Activated T-helper 1 cell treated with anti-CD3 and anti-CD28 coated beads, Interleukin-12 subunit alpha, Interleukin-12 subunit beta, Interleukin-2, Interleukin-4 antibody, amounts not matched to agents 30 ng/mL and 10 ng/mL and 1 ng/mL, durations not matched to agents 14 hours and 24 hours and 36 hours (primary cell): ENCODE measurements at regions of chrX and their contacts with region 1.

Region 1: DNA sequence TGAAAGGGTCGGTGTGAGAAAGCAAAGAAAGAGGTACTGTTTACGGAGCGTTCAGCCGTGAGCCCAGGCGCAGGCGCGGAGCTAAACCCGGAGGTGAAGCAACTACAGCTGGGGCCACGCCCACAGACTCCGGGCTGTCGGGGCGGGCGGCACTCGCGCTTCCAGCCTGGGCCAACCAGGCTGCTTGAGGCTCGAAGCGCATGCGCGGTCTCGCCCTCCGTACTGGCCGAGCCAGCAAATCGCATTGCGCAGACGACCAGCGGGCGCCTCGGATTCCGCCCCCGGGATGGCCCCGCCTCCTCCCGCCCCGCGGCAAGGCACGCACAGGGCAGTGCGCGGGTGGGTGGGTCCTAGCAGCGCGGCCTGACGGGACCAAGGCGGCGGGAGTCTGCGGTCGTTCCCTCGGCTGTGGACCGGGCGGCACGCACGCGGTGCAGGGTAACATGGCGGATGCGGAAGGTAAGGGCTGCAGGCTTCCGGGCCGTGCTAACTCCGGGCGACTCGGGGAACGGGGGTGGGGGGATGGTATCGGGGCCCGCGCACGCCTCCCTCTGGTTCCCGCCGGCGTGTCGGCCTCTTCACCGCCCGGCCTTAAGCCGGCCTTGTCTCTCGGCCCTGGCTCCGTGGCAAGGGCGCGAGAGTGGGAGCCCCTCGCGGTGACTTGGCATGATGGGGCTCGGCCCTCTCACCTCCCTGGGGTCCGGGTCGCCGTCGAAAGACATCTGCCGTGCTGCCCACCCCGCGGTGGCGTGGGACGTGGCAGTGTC is at the start of gene DKC1:
- DNase-seq: peak; percentile 93
- H3K4me3 Mint-ChIP-seq: peak within 1 kb of the TSS; percentile 89
- H3K27ac Mint-ChIP-seq: peak within 1 kb of the TSS; percentile 93
- H3K4me1 Mint-ChIP-seq: peaks cover 31% of the 10 kb centered on the region
- H3K27me3 Mint-ChIP-seq: no peaks in the 10 kb centered on the region
- total RNA-seq, gene DKC1: 186 and 188 TPM in 2 replicates

Region 2: DNA sequence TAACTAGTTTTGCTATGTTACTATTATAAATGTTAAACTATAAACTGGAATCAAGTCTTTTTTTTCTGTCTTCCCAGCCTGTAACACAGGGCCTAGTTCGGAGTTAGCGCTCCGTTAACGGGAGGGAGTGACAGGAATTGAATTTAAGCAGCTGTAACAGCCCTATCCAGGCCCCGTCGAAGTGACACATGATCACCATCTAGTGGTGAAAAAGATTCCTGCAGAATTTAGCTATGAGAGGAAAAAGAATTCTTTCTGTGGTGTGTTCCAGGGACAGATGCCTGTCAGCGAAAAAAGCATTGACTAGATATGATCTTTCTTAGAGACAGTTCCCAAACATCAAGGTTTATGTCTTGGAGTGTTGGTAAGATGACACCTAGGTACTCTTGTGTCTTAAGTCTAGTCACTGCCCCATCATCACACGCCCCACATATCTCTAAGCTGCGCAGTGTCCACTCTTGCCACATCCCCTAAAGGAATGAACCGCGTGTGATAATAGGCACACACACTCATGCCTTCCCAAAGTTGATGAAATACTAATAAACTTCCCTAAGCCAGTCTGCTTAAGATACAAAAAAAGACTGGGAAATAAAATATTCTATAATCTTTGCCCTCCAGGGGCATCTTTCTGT is 13.9 kb before region 1 on chrX:
- intact Hi-C with region 1: loop called (anchors 1 kb)
- DNase-seq: peak; percentile 34
- H3K4me3 Mint-ChIP-seq: peak overlapping the region; percentile 82
- H3K27ac Mint-ChIP-seq: peak overlapping the region; percentile 40
- H3K4me1 Mint-ChIP-seq: peaks cover 30% of the 10 kb centered on the region
- H3K27me3 Mint-ChIP-seq: peaks cover 3% of the 10 kb centered on the region

Region 3: GRCh38 chrX:154775419-154776349 is 13.0 kb after region 1 on chrX:
- intact Hi-C with region 1: loop called (anchors 2 kb)
- DNase-seq: no peak
- H3K4me3 Mint-ChIP-seq: peak overlapping the region; percentile 24
- H3K27ac Mint-ChIP-seq: peak overlapping the region; percentile 57
- H3K4me1 Mint-ChIP-seq: peaks cover 23% of the 10 kb centered on the region
- H3K27me3 Mint-ChIP-seq: no peaks in the 10 kb centered on the region

Region 4: DNA sequence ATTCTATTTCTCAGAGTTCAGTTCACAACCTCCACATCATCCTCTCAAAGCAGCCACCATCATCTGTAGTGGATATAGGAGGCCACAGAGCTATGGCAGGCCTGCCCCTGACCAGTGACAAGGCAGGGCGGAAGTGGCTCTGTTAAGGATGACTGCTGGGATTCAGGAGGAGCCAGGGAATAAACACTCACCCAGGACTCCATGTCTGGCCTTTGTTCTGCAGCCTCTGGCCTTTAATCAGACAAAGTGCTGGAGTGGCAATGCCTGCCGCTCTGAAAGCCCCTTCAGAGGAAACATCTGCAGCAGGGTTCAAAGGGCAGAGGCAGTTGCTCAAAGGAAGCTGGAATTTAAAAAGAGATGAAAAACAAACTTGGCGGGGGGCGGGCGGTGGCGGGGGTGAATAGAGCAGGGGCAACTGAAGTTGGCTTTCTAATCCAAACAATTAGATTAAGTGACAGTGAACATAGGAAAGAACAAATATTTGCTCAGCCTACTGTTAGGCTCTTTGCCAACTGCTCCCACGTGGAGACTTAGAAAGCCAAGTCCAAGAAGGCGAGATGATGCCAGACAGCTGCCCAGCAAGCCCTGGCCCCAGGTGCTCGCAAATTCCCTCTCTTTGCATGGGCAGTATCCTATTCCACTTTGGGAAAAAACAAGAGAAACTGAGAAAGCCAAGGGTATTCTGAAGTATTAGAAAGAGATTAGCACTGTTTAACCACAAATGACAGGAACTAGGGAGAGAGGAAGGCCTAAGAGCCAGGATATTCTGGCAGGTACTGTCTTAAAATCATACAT is 37.0 kb after region 1 on chrX:
- intact Hi-C with region 1: loop called (anchors 2 kb)
- DNase-seq: no peak
- H3K4me3 Mint-ChIP-seq: peak overlapping the region; percentile 59
- H3K27ac Mint-ChIP-seq: peak overlapping the region; percentile 98
- H3K4me1 Mint-ChIP-seq: peaks cover 81% of the 10 kb centered on the region
- H3K27me3 Mint-ChIP-seq: no peaks in the 10 kb centered on the region

Region 5: DNA sequence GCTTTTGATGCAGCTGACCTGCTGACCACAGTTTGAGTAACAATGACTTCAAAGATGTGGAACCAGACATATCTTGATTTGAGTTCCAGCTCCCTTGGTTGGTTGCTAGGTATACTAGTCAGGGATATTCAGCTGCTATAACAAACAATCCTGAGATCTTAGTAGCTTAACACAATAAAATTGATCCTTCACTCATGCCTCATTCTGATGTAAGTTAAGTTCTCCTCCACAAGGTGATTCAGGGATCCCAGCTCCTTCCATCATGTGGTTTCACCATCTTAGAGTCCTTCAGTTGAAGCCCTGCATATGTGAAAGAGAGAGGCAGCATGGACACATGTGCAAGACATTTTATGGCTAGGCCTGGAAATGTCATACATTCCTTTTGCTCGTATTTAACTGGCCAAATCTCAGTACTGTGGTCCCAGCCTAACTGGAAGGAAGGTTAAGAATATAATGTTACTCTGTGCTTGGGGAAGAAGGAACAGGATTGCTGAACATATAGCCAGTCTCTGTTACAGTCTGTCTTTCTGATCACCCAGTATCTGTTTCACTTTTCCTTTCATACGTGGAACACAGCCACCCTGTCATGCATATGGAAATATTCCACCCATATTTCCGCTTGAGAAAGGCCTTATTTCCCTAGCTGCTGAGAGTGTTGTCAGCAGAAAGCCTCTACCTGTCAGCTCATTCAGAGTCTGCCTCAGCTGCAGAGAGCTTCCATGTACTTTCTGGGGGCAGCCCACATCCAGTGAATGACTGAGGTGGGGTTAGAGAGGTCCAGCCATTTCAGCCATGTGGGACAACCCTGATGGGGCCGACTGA is 64.7 kb after region 1 on chrX:
- intact Hi-C with region 1: loop called (anchors 2 kb)
- DNase-seq: no peak
- H3K4me3 Mint-ChIP-seq: no peak overlapping the region
- H3K27ac Mint-ChIP-seq: peak overlapping the region; percentile 79
- H3K4me1 Mint-ChIP-seq: peaks cover 32% of the 10 kb centered on the region
- H3K27me3 Mint-ChIP-seq: no peaks in the 10 kb centered on the region